GM10248 (cell line): ENCODE measurements at regions of chr1 and their contacts with region 1.

Region 1: GRCh38 chr1:23496490-23497181 is 12.7 kb upstream of the ASAP3 start:
- DNase-seq: no peak
- CTCF ChIP-seq: no peak

Region 2: GRCh38 chr1:23129846-23130245 is 366.8 kb before region 1 on chr1:
- CTCF ChIA-PET with region 1: no interaction called
- POLR2A ChIA-PET with region 1: no interaction called
- DNase-seq: no peak
- CTCF ChIP-seq: no peak

Region 3: GRCh38 chr1:23452011-23452411 is 44.6 kb before region 1 on chr1:
- CTCF ChIA-PET with region 1: no interaction called
- POLR2A ChIA-PET with region 1: no interaction called
- DNase-seq: no peak
- CTCF ChIP-seq: no peak

Region 4: DNA sequence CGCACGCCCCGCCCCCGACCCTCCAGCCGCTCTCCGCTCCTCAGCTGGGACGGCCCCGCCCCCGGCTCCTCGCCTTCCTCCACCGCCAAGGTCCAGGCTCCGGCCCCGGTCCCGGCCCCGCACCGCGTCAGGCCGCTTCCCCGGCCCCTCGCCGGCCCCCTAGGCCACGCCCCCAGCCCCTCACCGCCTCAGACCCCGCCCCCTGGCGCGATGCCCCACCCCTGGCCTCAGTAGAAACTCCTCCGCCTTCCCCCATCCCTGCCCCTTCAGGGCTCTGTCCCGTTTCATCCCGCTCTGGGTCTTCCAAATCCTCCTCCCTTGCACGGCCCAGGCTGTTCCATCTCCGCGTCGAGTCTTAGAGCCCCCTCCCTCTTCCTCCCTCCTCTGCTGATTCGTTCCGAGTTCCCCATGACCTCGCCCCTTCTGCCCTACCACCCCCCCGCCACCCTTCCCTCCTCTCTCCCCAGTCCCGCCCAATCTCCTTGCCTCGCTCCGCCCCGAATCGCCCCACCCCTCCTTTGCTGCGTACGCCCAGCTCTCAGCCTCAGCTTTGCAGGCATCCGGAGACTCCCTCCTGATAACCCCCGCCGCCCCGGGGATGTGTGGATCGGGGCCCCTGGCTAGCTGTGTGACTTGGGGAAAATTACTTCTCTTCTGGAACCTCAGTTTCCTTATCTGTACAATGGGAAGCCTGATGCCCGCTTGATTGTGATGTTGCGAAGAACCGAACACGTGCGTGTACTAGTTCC is 12.2 kb before region 1 on chr1:
- CTCF ChIA-PET with region 1: interaction called, 74 read pairs
- POLR2A ChIA-PET with region 1: no interaction called
- DNase-seq: peak; percentile 92
- CTCF ChIP-seq: no peak

Region 5: DNA sequence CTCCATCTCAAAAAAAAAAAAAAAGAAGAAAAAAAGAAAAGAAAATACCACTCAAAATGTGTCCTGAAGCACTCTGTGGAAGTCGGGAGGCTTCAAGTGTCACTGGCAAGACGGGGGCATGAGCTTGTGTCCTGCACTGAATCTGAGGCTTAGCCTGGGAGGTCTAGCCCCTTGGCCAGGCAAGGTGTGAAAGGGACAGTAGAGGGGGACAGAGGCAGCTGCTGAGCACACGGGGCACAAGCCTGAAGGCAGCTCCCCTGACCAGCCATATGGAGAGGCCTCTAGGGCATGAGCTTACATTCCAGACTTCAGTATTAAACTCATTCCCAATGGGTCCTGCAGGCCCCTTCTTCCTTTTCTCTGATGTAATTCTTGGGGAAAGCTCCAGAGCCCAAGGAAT is 10.9 kb after region 1 on chr1:
- CTCF ChIA-PET with region 1: interaction called, 71 read pairs
- POLR2A ChIA-PET with region 1: no interaction called
- DNase-seq: no peak
- CTCF ChIP-seq: no peak

Region 6: GRCh38 chr1:23539698-23540266 is 43.1 kb after region 1 on chr1:
- CTCF ChIA-PET with region 1: interaction called, 508 read pairs
- POLR2A ChIA-PET with region 1: no interaction called
- DNase-seq: peak; percentile 91
- CTCF ChIP-seq: peak; percentile 95

Region 7: DNA sequence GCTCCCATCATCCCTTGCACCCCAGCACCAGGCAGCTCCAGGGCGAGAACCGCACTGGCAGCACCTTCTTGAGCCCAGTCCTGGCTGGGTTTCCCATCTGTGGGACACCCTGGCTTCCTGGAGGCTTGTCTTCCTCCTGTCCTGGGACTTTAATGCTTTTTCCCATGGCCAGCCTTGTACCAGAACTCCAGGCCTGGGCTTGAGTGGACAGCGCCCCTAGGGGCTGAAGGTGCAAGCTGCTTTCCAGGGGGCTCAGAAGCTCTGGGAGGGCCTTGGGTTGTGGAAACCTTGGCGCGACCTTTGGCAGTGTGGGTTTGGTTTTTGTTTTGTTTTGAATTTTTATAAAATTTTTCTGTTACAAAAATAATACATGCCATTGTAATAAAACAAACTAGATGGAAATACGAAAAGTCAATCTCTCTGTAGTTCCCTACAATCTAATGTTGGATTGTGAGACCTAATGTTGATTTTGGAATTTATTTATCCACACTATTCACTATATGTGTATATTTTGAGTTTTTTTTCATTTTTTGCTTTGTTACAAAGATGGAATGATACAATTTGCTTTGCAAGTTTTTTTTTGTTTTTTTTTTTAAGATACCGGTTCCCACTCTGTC is 161.1 kb after region 1 on chr1:
- CTCF ChIA-PET with region 1: interaction called, 13 read pairs
- POLR2A ChIA-PET with region 1: no interaction called
- DNase-seq: peak; percentile 70
- CTCF ChIP-seq: peak; percentile 76

Region 8: DNA sequence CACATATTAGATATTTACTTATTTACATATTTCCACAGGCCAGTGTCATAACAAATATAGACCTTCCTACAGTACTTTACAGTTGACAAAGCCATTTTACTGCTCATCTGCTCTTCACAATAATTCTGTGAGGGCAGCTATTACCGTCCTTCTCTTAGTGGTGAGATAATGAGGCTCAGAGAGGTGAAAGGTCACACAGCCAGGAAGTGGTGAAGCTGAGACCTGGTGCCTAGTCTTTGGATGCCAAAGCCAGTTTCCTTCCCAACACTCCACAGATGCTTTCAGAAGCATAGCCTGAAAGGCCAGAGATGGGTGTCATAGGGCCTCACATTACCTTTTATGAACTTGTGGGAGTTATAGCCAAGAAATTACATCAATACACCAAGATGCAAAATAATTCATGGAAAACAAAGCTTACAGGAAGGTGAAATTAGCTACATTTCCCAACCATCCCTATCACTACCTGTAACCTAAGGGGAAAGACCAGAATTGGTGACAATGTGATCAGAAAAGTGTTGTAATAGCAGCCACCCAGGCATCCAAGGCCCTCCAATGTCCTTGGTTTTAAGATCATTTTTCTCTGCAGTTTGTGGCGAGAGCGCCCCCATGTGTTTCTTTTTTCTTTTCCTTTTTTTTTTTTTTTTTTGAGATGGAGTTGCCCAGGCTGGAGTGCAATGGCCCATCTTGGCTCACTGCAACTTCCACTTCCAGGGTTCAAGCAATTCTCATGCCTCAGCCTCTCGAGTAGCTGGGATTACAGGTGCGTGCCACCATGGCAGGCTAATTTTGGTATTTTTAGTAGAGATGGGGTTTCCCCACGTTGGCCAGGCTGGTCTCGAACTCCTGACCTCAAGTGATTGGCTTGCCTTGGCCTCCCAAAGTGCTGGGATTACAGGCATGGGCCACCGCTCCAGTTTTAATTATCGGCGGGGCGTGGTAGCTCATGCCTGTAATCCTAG is 168.5 kb after region 1 on chr1:
- CTCF ChIA-PET with region 1: interaction called, 20 read pairs
- POLR2A ChIA-PET with region 1: no interaction called
- DNase-seq: peak; percentile 45
- CTCF ChIP-seq: peak; percentile 12